ENCODE measurements at regions of chr6 and their contacts with region 1.

Region 1: DNA sequence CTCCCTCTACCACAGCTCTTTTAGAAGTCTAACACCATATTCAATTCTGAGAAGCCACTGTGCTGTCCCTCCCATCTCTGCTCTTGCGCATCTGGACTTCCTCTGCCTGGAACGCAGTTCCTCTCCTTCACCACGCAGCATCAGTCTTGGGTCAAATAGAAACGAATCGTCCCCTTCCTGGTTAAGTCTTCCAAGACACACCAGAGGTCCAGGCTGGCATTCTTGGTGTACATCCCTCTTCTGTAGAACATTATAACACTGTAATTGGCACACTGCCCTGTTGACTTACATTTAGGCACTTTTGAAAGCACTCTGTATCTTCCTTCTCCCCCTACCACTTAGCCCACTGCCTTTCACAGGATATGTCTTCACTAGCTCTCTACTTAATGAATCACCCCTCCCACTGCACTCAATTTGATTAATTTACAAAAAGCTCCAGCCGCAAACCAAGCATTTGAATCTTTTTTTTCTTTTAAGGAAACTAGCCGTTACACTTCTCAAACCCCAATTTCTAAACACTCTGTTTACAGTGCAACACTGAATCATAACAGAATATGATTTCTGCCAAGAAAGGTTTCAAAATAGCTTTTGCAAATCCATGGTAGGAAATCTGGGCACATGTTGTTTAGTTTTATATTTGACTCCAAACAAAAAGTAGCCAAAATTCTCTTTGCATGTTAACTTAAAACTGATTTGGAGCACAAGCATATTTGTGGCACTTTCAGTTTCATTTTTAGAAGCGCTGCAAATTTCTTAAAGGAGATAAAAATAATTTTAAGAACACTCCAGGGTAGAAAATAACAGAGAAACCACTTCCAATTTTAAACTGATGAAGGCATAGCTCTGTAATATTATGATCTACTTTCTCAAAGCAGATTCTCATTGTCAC is 140.7 kb upstream of the CARMIL1 start:
- DNase-seq: peak; percentile 82
- H3K4me3 Mint-ChIP-seq: peak overlapping the region; percentile 88
- H3K27ac Mint-ChIP-seq: peak overlapping the region; percentile 98
- H3K4me1 Mint-ChIP-seq: peaks cover 46% of the 10 kb centered on the region
- H3K27me3 Mint-ChIP-seq: no peaks in the 10 kb centered on the region

Region 2: DNA sequence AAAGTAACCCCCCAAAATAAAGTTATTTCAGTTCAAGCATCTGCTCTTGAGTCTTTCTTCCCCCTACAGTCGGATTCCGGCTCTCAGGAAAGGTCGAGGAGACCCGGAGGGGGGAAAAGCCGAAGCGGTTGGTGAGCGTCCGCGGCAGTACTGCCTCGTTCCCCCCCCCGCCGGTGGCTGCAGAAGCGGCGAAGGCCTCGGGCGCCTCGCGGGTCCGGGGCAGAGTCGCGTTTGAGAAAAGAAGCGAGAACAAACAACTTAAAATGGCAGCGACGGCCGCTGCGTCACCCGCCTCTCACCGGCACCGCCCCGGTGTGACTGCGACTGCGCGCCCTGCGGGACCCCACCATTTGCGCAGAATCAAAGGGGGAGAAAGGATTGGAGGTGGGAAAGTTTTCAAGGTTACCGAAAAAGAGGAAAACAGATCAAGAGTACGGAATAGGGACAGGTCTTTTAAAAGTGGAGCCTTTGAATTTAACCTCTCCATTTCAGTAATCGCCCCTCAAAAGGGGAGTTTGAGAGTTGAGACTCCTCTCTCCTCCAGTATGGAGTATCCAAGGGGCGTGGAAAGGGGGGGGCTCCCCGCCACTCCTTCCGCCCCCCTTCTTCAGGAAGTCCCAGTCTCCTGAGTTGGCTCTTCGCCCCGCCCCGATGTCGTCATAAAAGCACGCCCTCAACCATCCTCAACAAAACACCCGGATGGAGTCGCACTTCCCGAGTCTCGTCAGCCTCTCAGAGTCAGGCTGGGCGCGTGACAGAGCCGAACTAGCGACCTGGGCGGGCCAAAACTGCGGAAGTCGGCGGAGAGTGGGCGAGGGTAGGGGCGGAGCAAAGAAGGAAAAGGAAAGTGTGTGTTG is 417.6 kb before region 1 on chr6:
- CTCF ChIA-PET with region 1: no interaction called
- intact Hi-C with region 1: loop called (anchors 1 kb)
- DNase-seq: peak; percentile 100
- H3K4me3 Mint-ChIP-seq: peak overlapping the region; percentile 99
- H3K27ac Mint-ChIP-seq: peak overlapping the region; percentile 95
- H3K4me1 Mint-ChIP-seq: peaks cover 29% of the 10 kb centered on the region
- H3K27me3 Mint-ChIP-seq: no peaks in the 10 kb centered on the region

Region 3: DNA sequence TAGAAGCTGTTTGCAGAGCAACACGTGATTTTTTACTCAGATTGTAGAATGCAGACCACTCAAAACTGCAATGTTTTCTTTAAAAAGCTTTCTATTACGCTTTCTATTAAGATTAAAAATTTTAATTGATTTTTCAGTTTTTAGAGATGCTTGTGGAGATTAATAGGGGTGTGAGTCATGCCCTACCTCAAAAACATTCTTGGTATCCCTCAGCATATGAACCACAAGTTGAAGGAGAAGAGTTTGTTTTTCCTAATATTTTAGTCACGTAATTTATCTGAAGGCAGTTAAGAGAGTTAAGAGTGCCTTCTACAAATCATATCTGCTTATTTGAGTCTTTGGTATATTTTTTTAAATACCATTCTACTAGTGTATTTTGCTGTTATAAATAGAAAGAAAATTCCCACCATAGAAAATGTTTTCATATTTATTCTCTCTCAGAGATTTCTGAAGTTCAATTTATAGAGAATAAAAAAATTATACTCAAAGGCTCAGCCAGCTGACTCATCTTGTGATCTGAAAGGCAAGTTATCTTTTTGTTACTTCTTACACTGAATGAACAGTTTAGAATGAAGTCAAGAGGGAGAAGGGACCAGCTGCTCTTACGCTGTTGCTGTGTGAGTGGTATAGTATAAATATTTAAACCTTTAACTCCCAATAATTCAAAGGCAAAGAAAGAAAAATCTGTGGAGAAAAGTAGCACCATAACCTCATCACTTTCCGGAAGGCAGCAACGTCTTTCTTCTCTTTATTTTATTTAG is 210.3 kb before region 1 on chr6:
- CTCF ChIA-PET with region 1: no interaction called
- intact Hi-C with region 1: loop called (anchors 1 kb)
- DNase-seq: no peak
- H3K4me3 Mint-ChIP-seq: peak overlapping the region; percentile 90
- H3K27ac Mint-ChIP-seq: peak overlapping the region; percentile 96
- H3K4me1 Mint-ChIP-seq: peaks cover 77% of the 10 kb centered on the region
- H3K27me3 Mint-ChIP-seq: no peaks in the 10 kb centered on the region

Region 4: DNA sequence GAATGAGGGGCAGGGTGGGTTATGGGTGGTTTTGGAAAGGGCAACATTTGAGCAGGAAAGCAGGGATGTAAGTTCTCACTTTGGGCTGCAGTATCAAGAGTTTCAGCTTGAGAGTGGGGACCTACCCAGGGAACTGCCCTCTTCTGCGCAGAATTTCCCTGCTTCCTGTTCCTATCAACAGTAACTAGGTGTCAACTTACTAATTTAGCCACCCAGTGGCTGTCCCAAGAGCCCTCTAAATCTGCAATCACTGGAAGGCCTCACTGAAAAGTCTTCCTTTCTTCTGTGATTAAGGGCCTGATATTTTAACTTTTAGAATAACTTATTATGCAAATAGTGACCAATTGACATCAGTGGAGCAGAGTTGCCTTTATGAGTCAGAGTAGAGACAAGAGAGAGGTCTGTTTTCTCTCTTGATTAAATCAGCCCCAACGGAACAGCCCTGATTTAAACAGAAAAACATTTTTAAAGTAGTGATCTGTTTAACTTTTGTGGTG is 84.6 kb before region 1 on chr6:
- CTCF ChIA-PET with region 1: no interaction called
- intact Hi-C with region 1: loop called (anchors 1 kb)
- DNase-seq: peak; percentile 68
- H3K4me3 Mint-ChIP-seq: no peak overlapping the region
- H3K27ac Mint-ChIP-seq: peak overlapping the region; percentile 83
- H3K4me1 Mint-ChIP-seq: peaks cover 79% of the 10 kb centered on the region
- H3K27me3 Mint-ChIP-seq: no peaks in the 10 kb centered on the region

Region 5: GRCh38 chr6:25179051-25179778 is 40.7 kb after region 1 on chr6:
- CTCF ChIA-PET with region 1: no interaction called
- intact Hi-C with region 1: loop called (anchors 1 kb)
- DNase-seq: no peak
- H3K4me3 Mint-ChIP-seq: no peak overlapping the region
- H3K27ac Mint-ChIP-seq: no peak overlapping the region
- H3K4me1 Mint-ChIP-seq: peaks cover 27% of the 10 kb centered on the region
- H3K27me3 Mint-ChIP-seq: no peaks in the 10 kb centered on the region

Region 6: GRCh38 chr6:25913741-25914140 is 775.3 kb after region 1 on chr6:
- CTCF ChIA-PET with region 1: no interaction called
- intact Hi-C with region 1: loop called (anchors 1 kb)
- DNase-seq: peak; percentile 35
- H3K4me3 Mint-ChIP-seq: no peak overlapping the region
- H3K27ac Mint-ChIP-seq: peak overlapping the region; percentile 85
- H3K4me1 Mint-ChIP-seq: peaks cover 46% of the 10 kb centered on the region
- H3K27me3 Mint-ChIP-seq: peaks cover 2% of the 10 kb centered on the region

Measured in activated naive CD4-positive, alpha-beta T cell treated with anti-CD3 and anti-CD28 coated beads for 36 hours (primary cell).